H1 (cell line): ENCODE measurements at regions of chr1 and their contacts with region 1.

Region 1: DNA sequence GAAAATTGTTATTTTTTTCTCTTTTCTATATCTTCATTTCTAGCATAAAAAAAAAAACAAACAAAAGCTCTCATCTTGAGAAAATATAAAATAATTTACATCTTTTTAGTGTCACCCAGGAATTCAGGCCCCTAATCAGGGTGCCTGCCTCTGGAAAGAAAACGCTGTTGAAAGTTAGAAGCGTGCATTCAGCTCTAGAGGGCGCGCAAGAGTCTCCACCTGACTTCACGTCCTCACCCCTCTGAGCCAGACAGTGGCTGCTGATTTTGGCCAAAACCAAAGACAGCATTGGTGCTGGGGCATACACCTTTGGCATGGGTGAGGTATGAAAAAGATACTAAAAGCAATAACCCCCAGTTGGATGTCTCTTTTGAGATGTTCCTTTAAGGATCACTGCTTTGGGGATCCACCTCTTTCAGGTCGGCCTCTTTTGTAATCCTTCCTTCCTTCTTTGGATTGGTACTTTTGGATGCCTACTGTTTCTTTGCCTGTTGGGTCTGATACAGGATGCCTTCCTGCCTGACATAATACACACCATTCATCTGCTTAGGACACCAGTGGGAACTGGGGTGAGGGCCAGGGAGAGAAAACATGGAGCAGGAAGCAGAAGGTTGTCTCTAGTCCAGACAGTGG is 77.6 kb upstream of the CHRM3 start:
- DNase-seq: peak; percentile 21 to 80
- H3K4me3 ChIP-seq: no peak overlapping the region
- H3K27ac ChIP-seq: no peak overlapping the region
- H3K4me1 ChIP-seq: peaks cover 0 to 3% (median 1%) of the 10 kb centered on the region in 4 experiments; a peak in 2 of 7 replicates
- H3K27me3 ChIP-seq: no peaks in the 10 kb centered on the region
- CTCF ChIP-seq: peak; percentile 74 to 87 (median 75)
- EP300 ChIP-seq: no peak
- POLR2A ChIP-seq: no peak
- RAD21 ChIP-seq: peak; percentile 80 to 86

Region 2: DNA sequence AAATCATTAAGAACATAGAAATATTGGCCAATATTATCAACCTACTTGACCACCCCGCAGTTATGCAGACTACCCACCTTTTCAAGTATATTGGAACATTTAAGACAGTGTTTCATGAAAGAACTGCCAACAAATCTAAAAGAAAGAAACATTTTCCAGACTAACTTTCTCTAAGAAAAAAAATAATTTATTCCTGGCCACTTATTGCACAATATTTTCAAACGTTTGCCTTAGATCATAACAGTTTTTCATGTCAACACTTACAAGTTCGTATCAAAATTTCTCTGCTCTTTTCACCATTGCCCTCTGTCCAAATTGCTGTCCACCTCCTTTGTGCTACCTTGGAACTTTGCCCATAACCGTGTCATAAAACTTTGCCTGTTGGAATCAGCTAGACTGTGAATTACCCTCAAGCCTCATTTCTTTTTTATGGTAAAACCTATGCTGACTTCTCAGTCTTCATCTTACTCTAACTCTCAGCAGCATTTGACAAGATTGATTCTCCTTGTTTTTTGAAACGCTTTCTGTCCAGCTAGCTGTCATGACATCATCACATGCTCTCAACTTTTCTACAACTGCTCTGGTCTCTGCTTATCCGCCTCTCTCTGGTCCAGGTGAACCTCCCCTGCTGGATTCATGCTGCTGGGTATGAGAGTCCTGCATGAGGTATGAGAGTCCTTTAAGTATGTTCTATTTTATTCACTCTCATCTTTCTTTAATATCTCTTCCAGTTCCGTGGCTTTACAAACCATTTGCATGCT is 15.3 kb before region 1 on chr1:
- CTCF ChIA-PET with region 1: interaction called, 17 read pairs
- POLR2A ChIA-PET with region 1: no interaction called
- DNase-seq: no peak
- H3K4me3 ChIP-seq: no peak overlapping the region
- H3K27ac ChIP-seq: no peak overlapping the region
- H3K4me1 ChIP-seq: peaks cover 0 to 3% (median 1%) of the 10 kb centered on the region in 4 experiments; a peak in 3 of 7 replicates
- H3K27me3 ChIP-seq: no peaks in the 10 kb centered on the region
- CTCF ChIP-seq: no peak
- EP300 ChIP-seq: no peak
- POLR2A ChIP-seq: no peak
- RAD21 ChIP-seq: no peak

Region 3: GRCh38 chr1:239322369-239322768 is 13.6 kb after region 1 on chr1:
- CTCF ChIA-PET with region 1: interaction called, 14 read pairs
- POLR2A ChIA-PET with region 1: no interaction called
- DNase-seq: no peak
- H3K4me3 ChIP-seq: no peak overlapping the region
- H3K27ac ChIP-seq: no peak overlapping the region
- H3K4me1 ChIP-seq: no peaks in the 10 kb centered on the region; a peak in 1 of 7 replicates
- H3K27me3 ChIP-seq: no peaks in the 10 kb centered on the region
- CTCF ChIP-seq: no peak
- EP300 ChIP-seq: no peak
- POLR2A ChIP-seq: no peak
- RAD21 ChIP-seq: no peak

Region 4: DNA sequence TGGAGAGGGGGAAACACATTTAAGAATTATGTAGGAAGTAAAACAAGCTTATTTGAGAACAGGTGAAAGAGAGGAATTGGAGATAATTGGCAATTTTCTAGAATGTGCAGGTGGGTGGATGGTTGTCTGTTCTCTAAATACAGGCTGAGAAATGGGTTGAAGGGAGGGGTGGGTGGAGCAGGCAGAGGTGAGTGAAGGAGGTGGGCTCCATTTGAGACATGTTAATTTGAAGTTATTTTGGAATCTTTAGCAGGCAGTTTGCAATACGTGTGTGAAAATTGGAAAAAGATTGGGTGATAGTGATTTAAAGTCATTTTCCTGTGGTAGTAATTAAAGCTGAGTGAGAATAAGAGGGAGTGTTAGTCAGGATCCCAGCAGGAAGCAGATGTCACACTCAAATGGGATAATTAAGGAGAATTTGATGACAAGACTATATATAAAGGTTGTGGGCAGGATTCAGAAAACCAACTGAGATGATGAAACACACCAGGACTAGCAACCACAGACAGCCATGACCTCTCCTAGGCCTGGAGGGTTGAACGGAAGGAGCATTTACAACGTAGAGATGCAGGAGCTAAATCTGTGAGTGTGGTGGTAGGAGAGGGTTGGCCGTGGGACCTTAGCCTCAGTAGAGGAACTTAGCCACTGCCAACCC is 118.1 kb after region 1 on chr1:
- CTCF ChIA-PET with region 1: no interaction called
- POLR2A ChIA-PET with region 1: no interaction called
- DNase-seq: no peak
- H3K4me3 ChIP-seq: no peak overlapping the region
- H3K27ac ChIP-seq: no peak overlapping the region
- H3K4me1 ChIP-seq: no peaks in the 10 kb centered on the region
- H3K27me3 ChIP-seq: no peaks in the 10 kb centered on the region
- CTCF ChIP-seq: no peak
- EP300 ChIP-seq: no peak
- POLR2A ChIP-seq: no peak
- RAD21 ChIP-seq: no peak